ENCODE measurements at regions of chr2 and their contacts with region 1.

Region 1: DNA sequence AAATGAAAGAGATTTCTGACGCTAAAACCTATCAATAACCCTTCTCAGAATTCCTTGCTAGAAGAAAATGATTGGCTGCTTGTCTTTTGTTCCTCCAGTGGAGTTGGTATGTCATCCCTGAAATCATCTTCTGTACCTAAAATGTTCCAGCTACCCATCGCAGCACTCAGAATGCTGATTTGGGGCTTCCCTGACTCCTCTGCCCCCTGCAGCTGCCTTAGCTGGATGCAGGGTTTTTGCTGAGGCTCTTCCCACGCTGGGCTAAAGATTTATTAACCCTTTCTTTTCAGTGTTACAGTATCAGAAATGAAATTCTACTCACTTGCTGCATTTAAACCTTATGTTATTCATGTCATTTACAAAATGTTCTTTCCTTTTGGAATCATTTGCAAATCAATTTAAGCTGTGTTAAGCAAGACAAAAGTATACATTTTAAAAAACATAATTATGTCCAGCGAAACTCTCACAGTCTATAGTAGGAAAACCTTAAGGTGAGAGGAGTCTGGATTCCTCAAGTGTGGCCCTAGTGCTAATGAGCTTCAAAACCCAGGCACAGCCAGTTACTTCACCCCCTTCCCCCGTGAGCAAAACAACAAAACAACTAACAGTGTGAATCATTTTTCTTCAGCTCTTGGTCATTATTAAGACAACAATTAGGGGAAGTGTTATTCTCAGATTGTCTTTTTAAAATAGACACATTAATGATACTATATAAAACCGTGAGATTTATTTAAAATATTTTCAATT is 32.8 kb downstream of the PKP4 start:
- DNase-seq: no peak
- H3K4me3 ChIP-seq: peak overlapping the region in 1 of 4 experiments; percentile 20; a peak in 1 of 8 replicates
- H3K27ac ChIP-seq: no peak overlapping the region
- H3K4me1 ChIP-seq: peaks cover 0 to 27% (median 24%) of the 10 kb centered on the region in 4 experiments; a peak in 5 of 7 replicates
- H3K27me3 ChIP-seq: no peaks in the 10 kb centered on the region
- CTCF ChIP-seq: peak in 2 of 3 experiments; percentile 6 to 9; a peak in 2 of 4 replicates
- EP300 ChIP-seq: no peak
- POLR2A ChIP-seq: no peak
- RAD21 ChIP-seq: peak in 1 of 2 experiments; percentile 32; a peak in 2 of 4 replicates

Region 2: DNA sequence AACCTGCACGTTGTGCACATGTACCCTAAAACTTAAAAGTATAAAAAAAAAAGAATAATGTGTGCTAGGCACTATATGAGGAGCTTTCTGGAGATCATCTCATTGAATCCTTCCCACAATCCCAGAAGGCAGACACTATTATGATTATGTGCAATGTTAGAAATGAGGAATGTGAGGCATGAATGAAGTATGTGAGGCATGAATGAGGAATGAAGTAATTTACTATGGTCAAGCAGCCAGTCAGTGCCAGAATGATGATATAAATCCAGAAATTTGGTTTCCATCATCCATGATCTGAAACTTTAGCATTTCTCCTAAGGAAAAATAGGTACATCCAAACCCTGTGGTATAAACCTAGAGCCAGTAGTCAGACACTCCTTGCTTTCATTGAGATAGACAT is 75.0 kb before region 1 on chr2:
- CTCF ChIA-PET with region 1: no interaction called
- POLR2A ChIA-PET with region 1: no interaction called
- DNase-seq: no peak
- H3K4me3 ChIP-seq: no peak overlapping the region
- H3K27ac ChIP-seq: no peak overlapping the region
- H3K4me1 ChIP-seq: peaks cover 3 to 22% (median 4%) of the 10 kb centered on the region in 4 experiments; a peak in 4 of 7 replicates
- H3K27me3 ChIP-seq: peaks cover 1 to 9% (median 9%) of the 10 kb centered on the region in 4 experiments; a peak in 5 of 7 replicates
- CTCF ChIP-seq: no peak
- EP300 ChIP-seq: no peak
- POLR2A ChIP-seq: no peak
- RAD21 ChIP-seq: no peak

Region 3: GRCh38 chr2:158473719-158474392 is 15.7 kb before region 1 on chr2:
- CTCF ChIA-PET with region 1: interaction called, 24 read pairs
- POLR2A ChIA-PET with region 1: interaction called, 4 read pairs
- DNase-seq: no peak
- H3K4me3 ChIP-seq: no peak overlapping the region
- H3K27ac ChIP-seq: no peak overlapping the region
- H3K4me1 ChIP-seq: peaks cover 2 to 9% (median 6%) of the 10 kb centered on the region in 4 experiments; a peak in 3 of 7 replicates
- H3K27me3 ChIP-seq: no peaks in the 10 kb centered on the region
- CTCF ChIP-seq: peak in 2 of 3 experiments; percentile 38 to 73; a peak in 2 of 4 replicates
- EP300 ChIP-seq: no peak
- POLR2A ChIP-seq: no peak
- RAD21 ChIP-seq: peak; percentile 34 to 48